ENCODE measurements at regions of chr7 and their contacts with region 1.

Region 1: GRCh38 chr7:21427182-21427870 is 557 bp upstream of the SP4 start:
- DNase-seq: peak; percentile 98 to 100 (median 99)
- ATAC-seq: peak; percentile 85
- H3K4me3 ChIP-seq: peak overlapping the region; percentile 99
- H3K4me3 Mint-ChIP-seq: peak overlapping the region; percentile 94 to 99 (median 98)
- H3K27ac ChIP-seq: peak overlapping the region; percentile 99
- H3K27ac Mint-ChIP-seq: peak overlapping the region; percentile 94 to 100 (median 99)
- H3K4me1 ChIP-seq: peaks cover 37 to 41% of the 10 kb centered on the region in 2 donors
- H3K4me1 Mint-ChIP-seq: peaks cover 24 to 52% (median 52%) of the 10 kb centered on the region in 7 donors
- H3K27me3 ChIP-seq: no peaks in the 10 kb centered on the region
- H3K27me3 Mint-ChIP-seq: no peaks in the 10 kb centered on the region

Region 2: GRCh38 chr7:21261627-21262594 is 165.4 kb before region 1 on chr7:
- CTCF ChIA-PET with region 1: interaction called, 3 read pairs
- POLR2A ChIA-PET with region 1: no interaction called
- intact Hi-C with region 1: loop called in 1 of 2 experiments (anchors 2 kb)
- DNase-seq: peak in 7 of 9 donors; percentile 20 to 45 (median 27)
- ATAC-seq: peak; percentile 74
- H3K4me3 ChIP-seq: no peak overlapping the region
- H3K4me3 Mint-ChIP-seq: peak overlapping the region in 1 of 10 donors; percentile 49
- H3K27ac ChIP-seq: no peak overlapping the region
- H3K27ac Mint-ChIP-seq: peak overlapping the region in 2 of 9 donors; percentile 60 to 63
- H3K4me1 ChIP-seq: peaks cover 0 to 2% of the 10 kb centered on the region in 2 donors
- H3K4me1 Mint-ChIP-seq: peaks cover 0 to 21% (median 9%) of the 10 kb centered on the region in 7 donors
- H3K27me3 ChIP-seq: no peaks in the 10 kb centered on the region
- H3K27me3 Mint-ChIP-seq: peaks cover 3 to 10% (median 6%) of the 10 kb centered on the region in 5 donors

Region 3: DNA sequence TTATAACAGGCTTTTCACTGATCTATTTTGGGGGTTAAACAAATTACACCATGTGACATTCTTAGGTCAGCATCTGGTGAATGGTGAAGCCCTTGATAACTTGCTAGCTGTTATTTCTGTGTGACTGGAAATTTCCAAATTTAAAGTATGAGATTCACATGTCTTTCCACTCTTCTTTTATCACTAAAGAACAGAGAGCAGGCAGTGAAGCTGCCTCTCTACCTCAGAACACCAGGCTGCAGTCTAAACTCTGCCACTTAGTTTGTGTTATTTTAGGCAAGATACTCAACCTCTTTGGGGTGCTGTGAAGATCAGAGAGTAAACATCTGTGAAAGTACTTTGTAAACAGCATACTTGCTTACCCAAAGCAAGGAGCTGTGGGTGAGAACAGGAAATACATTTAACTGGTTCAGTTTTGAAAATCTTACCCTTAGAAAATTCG is 14.9 kb before region 1 on chr7:
- CTCF ChIA-PET with region 1: no interaction called
- POLR2A ChIA-PET with region 1: no interaction called
- intact Hi-C with region 1: loop called in 1 of 2 experiments (anchors 2 kb)
- DNase-seq: peak in 3 of 9 donors; percentile 7 to 23 (median 16)
- ATAC-seq: peak; percentile 72
- H3K4me3 ChIP-seq: peak overlapping the region; percentile 6
- H3K4me3 Mint-ChIP-seq: peak overlapping the region in 3 of 10 donors; percentile 14 to 70 (median 18)
- H3K27ac ChIP-seq: no peak overlapping the region
- H3K27ac Mint-ChIP-seq: peak overlapping the region in 6 of 9 donors; percentile 1 to 90 (median 28)
- H3K4me1 ChIP-seq: peaks cover 0 to 29% of the 10 kb centered on the region in 2 donors
- H3K4me1 Mint-ChIP-seq: peaks cover 7 to 57% (median 17%) of the 10 kb centered on the region in 7 donors
- H3K27me3 ChIP-seq: no peaks in the 10 kb centered on the region
- H3K27me3 Mint-ChIP-seq: peaks cover 0 to 4% (median 0%) of the 10 kb centered on the region in 5 donors

Region 4: DNA sequence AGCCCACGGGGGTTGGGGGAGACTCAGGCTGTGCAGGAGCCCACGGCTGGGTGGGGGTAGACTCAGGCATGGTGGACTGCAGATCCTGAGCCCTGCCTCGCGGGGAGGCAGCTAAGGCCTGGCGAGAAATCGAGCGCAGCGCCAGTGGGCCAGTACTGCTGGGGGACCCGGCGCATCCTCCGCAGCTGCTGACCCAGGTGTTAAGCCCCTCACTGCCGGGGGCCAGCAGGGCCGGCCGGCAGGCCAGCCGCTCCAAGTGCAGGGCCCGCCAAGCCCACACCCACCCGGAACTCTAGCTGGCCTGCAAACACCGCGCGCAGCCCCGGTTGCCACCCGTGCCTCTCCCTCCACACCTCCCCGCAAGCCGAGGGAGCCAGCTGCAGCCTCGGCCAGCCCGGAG is 34.0 kb after region 1 on chr7:
- CTCF ChIA-PET with region 1: no interaction called
- POLR2A ChIA-PET with region 1: no interaction called
- intact Hi-C with region 1: no loop called
- DNase-seq: no peak
- ATAC-seq: no peak
- H3K4me3 ChIP-seq: no peak overlapping the region
- H3K4me3 Mint-ChIP-seq: peak overlapping the region in 1 of 10 donors; percentile 31
- H3K27ac ChIP-seq: no peak overlapping the region
- H3K27ac Mint-ChIP-seq: peak overlapping the region in 2 of 9 donors; percentile 0 to 7
- H3K4me1 ChIP-seq: peaks cover 0 to 8% of the 10 kb centered on the region in 2 donors
- H3K4me1 Mint-ChIP-seq: peaks cover 23 to 71% (median 55%) of the 10 kb centered on the region in 7 donors
- H3K27me3 ChIP-seq: no peaks in the 10 kb centered on the region
- H3K27me3 Mint-ChIP-seq: no peaks in the 10 kb centered on the region

Region 5: DNA sequence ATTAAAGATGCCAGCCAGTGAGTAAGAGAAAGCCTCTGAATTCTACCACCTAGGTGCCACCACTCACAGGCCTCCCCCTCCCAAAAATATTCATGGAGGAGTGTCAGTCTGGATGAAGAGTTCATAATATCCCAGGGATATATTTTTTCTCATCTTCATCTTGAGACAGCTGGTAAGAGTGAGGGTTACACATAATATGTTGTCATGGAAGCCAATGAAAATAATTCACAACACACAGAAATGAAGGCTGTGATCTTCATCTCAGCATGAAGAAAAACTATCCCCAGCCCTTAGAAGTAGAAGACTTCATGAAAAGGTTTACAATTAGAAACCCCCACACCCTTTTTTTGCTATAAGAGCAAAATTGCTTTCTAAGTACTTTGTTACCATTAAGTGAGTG is 291.1 kb after region 1 on chr7:
- CTCF ChIA-PET with region 1: no interaction called
- POLR2A ChIA-PET with region 1: no interaction called
- intact Hi-C with region 1: no loop called
- DNase-seq: no peak
- ATAC-seq: no peak
- H3K4me3 ChIP-seq: no peak overlapping the region
- H3K4me3 Mint-ChIP-seq: no peak overlapping the region
- H3K27ac ChIP-seq: no peak overlapping the region
- H3K27ac Mint-ChIP-seq: no peak overlapping the region
- H3K4me1 ChIP-seq: no peaks in the 10 kb centered on the region
- H3K4me1 Mint-ChIP-seq: peaks cover 0 to 2% (median 0%) of the 10 kb centered on the region in 7 donors
- H3K27me3 ChIP-seq: no peaks in the 10 kb centered on the region
- H3K27me3 Mint-ChIP-seq: peaks cover 0 to 2% (median 0%) of the 10 kb centered on the region in 5 donors

Region 6: GRCh38 chr7:21898265-21898930 is 471.1 kb after region 1 on chr7:
- CTCF ChIA-PET with region 1: no interaction called
- POLR2A ChIA-PET with region 1: no interaction called
- intact Hi-C with region 1: loop called in 1 of 2 experiments (anchors 5 kb)
- DNase-seq: peak in 6 of 9 donors; percentile 36 to 59 (median 48)
- ATAC-seq: peak; percentile 77
- H3K4me3 ChIP-seq: peak overlapping the region; percentile 46
- H3K4me3 Mint-ChIP-seq: peak overlapping the region; percentile 81 to 90 (median 86)
- H3K27ac ChIP-seq: peak overlapping the region; percentile 46
- H3K27ac Mint-ChIP-seq: peak overlapping the region; percentile 90 to 98 (median 96)
- H3K4me1 ChIP-seq: peaks cover 0 to 19% of the 10 kb centered on the region in 2 donors
- H3K4me1 Mint-ChIP-seq: peaks cover 17 to 38% (median 25%) of the 10 kb centered on the region in 7 donors
- H3K27me3 ChIP-seq: no peaks in the 10 kb centered on the region
- H3K27me3 Mint-ChIP-seq: no peaks in the 10 kb centered on the region

Region 7: DNA sequence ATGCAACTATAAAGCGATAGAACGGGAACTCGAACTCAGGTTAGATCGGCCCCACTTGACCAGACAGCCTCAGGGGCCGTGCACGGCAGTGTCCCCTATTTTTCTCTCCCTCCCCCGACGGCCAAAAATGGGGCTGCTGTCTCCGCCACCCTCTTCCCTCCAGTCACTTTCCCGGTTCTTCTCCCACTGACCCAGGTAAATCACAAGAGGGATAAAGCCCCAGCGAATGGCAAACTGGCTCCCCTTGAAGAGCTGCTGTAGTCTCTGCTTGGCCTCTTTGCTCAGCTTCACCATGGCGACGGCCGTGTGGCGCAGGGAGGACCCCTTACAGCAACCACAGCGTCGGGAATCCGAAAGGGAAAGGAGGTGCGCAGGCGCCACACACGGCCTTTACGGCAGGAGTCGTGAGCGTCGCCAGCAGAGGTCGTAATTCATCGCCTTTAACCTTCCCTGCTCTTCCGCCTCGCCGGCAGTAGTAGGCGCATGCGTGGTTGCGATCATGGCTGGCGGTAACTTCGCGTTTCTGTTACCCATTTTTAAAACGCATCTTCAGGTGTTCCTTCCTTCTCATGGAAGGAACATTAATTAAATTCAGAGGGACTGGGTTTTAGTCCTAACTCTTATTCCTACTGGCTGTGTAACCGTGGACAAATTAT is 1395.3 kb after region 1 on chr7 and contains the start of gene TOMM7:
- CTCF ChIA-PET with region 1: no interaction called
- POLR2A ChIA-PET with region 1: no interaction called
- intact Hi-C with region 1: loop called in 1 of 2 experiments (anchors 1 kb)
- DNase-seq: peak; percentile 68 to 92 (median 90)
- ATAC-seq: peak; percentile 99
- H3K4me3 ChIP-seq: peak within 1 kb of the TSS; percentile 83
- H3K4me3 Mint-ChIP-seq: peak within 1 kb of the TSS; percentile 93 to 100 (median 99)
- H3K27ac ChIP-seq: peak within 1 kb of the TSS; percentile 94
- H3K27ac Mint-ChIP-seq: peak within 1 kb of the TSS; percentile 94 to 100 (median 99)
- H3K4me1 ChIP-seq: peaks cover 6 to 19% of the 10 kb centered on the region in 2 donors
- H3K4me1 Mint-ChIP-seq: peaks cover 15 to 53% (median 43%) of the 10 kb centered on the region in 7 donors
- H3K27me3 ChIP-seq: peaks cover 0 to 4% of the 10 kb centered on the region in 2 donors
- H3K27me3 Mint-ChIP-seq: peaks cover 15 to 36% (median 19%) of the 10 kb centered on the region in 5 donors
- total RNA-seq, gene TOMM7: 302 to 737 (median 649) TPM

Region 8: DNA sequence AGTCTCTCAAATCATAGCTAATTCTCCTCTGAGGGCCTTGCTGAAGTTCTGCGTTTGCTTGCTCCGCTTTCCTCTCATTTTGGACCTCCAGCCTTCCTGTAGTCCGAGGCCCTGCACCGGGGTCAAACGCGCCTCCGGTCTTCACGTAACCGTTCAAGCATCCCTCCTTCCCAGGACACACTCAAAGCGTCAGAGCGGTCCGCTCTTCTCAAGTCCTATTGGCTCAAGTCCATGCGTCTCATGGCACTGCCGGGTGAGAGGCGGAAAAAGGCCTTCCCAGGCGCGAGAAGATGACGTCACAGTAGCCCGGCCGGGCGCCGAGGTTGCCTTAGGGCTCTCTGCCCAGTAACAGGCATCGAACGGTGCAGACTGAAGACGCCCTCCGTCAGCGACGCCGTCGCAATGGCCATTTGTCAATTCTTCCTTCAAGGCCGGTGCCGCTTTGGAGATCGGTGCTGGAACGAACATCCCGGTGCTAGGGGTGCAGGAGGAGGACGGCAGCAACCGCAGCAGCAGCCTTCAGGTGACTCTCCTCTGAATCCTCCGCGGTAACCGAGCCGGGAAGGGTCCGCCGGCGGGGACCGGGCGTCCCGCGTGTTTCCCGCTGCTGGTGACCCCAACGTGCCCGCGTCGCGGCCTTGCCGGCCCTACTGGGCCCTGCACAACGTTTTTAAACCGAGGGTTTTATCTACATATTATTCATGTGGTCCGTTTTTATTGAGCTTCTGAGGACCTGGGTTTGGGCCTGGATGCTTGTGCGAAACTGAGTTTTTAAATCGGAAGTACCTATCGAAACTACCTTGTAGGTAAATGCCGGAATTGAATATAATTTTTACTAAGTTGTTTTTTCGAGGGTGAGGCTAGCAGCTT is 1754.6 kb after region 1 on chr7 and contains the start of gene NUP42:
- CTCF ChIA-PET with region 1: no interaction called
- POLR2A ChIA-PET with region 1: no interaction called
- intact Hi-C with region 1: loop called (anchors 2 to 5 kb)
- DNase-seq: peak; percentile 87 to 95 (median 93)
- ATAC-seq: peak; percentile 97
- H3K4me3 ChIP-seq: peak within 1 kb of the TSS; percentile 86
- H3K4me3 Mint-ChIP-seq: peak within 1 kb of the TSS; percentile 95 to 100 (median 98)
- H3K27ac ChIP-seq: peak within 1 kb of the TSS; percentile 85
- H3K27ac Mint-ChIP-seq: peak within 1 kb of the TSS; percentile 97 to 99 (median 98)
- H3K4me1 ChIP-seq: peaks cover 16 to 17% of the 10 kb centered on the region in 2 donors
- H3K4me1 Mint-ChIP-seq: peaks cover 20 to 50% (median 43%) of the 10 kb centered on the region in 7 donors
- H3K27me3 ChIP-seq: no peaks in the 10 kb centered on the region
- H3K27me3 Mint-ChIP-seq: peaks cover 0 to 16% (median 0%) of the 10 kb centered on the region in 5 donors
- total RNA-seq, gene NUP42: 19.8 to 37.7 (median 27.5) TPM

Measured in naive thymus-derived CD4-positive, alpha-beta T cell (primary cell).